ENCODE measurements at regions of chr12 and their contacts with region 1.

Region 1: DNA sequence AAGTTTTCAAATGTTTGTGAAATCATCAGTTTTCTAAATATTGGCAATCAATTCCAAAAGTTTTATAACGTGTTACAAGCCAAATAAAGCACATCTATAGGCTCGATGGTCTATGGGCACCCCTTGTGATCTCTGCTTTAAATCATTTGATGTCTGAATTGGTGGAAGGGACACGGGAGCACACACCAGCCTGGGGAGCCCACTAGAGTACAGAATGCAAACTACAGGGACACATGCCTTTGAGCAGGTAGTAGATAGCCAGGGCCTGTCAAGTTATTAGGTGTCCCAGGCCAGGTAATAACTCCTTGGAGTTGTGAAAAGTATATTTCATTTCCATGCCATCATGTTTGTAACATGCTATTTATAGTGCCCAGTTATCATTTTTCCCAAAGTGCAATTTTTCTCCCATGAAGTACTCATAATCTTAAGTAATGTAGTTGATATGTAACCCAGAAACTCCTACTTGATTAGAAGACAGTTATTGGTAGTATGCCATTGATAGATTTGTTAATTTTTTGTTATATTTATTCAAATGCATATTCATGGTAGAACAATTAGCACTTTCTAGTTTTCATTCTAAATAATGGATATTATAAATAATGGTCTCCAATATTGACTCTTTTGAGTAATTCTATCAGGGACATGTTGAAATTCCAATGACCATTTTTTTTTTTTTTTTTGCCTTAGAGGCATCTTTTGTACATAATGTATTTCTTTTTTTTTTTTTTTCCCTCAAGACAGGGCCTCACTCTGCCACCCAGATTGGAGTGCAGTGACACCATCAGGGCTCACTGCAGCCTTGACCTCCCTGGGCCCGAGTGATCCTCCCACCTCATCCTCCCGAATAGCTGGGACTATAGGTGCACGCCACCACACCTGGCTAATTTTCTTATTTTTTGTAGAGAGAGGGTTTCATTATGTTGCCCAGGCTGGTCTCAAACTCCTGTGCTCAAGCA is 96.9 kb upstream of the FGD4 start:
- DNase-seq: no peak
- H3K4me3 ChIP-seq: no peak overlapping the region
- H3K27ac ChIP-seq: no peak overlapping the region
- H3K4me1 ChIP-seq: no peaks in the 10 kb centered on the region
- H3K27me3 ChIP-seq: no peaks in the 10 kb centered on the region
- CTCF ChIP-seq: peak in 3 of 4 experiments; percentile 6 to 18 (median 8)
- POLR2A ChIP-seq: no peak

Region 2: GRCh38 chr12:32051559-32052414 is 250.7 kb before region 1 on chr12:
- intact Hi-C with region 1: loop called (anchors 10 kb)
- DNase-seq: peak in 1 of 2 donors; percentile 68
- H3K4me3 ChIP-seq: no peak overlapping the region
- H3K27ac ChIP-seq: peak overlapping the region; percentile 60 to 77
- H3K4me1 ChIP-seq: no peaks in the 10 kb centered on the region
- H3K27me3 ChIP-seq: no peaks in the 10 kb centered on the region
- CTCF ChIP-seq: no peak
- POLR2A ChIP-seq: no peak